Activated B cell treated with CpG ODN at 0.5 μM for 24 hours (primary cell): ENCODE measurements at regions of chr6 and their contacts with region 1.

Region 1: GRCh38 chr6:130322673-130323268 is 43.0 kb upstream of the TMEM200A start:
- DNase-seq: no peak
- ATAC-seq: peak; percentile 42
- H3K4me3 Mint-ChIP-seq: no peak overlapping the region
- H3K27ac Mint-ChIP-seq: no peak overlapping the region
- H3K4me1 Mint-ChIP-seq: peaks cover 2% of the 10 kb centered on the region
- H3K27me3 Mint-ChIP-seq: no peaks in the 10 kb centered on the region
- CTCF ChIP-seq: peak; percentile 87

Region 2: DNA sequence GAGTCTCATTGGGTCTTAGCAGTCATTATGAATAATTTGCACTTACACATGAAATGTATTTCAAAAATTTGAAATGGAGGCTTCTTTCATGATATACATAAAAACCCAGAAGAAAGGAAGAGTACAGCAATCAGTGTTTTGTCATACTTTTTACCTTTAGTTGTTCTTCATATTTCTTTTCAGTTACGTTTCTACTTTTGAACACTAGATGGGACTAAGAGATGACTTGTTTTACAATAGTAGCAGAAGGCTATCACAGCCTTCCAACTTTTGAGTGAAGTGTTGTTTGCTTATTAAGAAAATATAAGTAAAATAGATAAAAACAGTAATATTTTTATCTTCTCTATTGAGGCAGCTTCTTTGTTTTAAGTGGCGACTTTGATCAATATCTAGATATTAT is 246.3 kb before region 1 on chr6:
- CTCF ChIA-PET with region 1: interaction called, 4 read pairs
- POLR2A ChIA-PET with region 1: no interaction called
- intact Hi-C with region 1: loop called (anchors 2 kb)
- DNase-seq: no peak
- ATAC-seq: no peak
- H3K4me3 Mint-ChIP-seq: no peak overlapping the region
- H3K27ac Mint-ChIP-seq: peak overlapping the region; percentile 38
- H3K4me1 Mint-ChIP-seq: peaks cover 18% of the 10 kb centered on the region
- H3K27me3 Mint-ChIP-seq: no peaks in the 10 kb centered on the region
- CTCF ChIP-seq: no peak

Region 3: GRCh38 chr6:130426066-130426721 is 103.4 kb after region 1 on chr6:
- CTCF ChIA-PET with region 1: no interaction called
- POLR2A ChIA-PET with region 1: no interaction called
- intact Hi-C with region 1: no loop called
- DNase-seq: no peak
- ATAC-seq: no peak
- H3K4me3 Mint-ChIP-seq: no peak overlapping the region
- H3K27ac Mint-ChIP-seq: no peak overlapping the region
- H3K4me1 Mint-ChIP-seq: no peaks in the 10 kb centered on the region
- H3K27me3 Mint-ChIP-seq: peaks cover 3% of the 10 kb centered on the region
- CTCF ChIP-seq: no peak

Region 4: DNA sequence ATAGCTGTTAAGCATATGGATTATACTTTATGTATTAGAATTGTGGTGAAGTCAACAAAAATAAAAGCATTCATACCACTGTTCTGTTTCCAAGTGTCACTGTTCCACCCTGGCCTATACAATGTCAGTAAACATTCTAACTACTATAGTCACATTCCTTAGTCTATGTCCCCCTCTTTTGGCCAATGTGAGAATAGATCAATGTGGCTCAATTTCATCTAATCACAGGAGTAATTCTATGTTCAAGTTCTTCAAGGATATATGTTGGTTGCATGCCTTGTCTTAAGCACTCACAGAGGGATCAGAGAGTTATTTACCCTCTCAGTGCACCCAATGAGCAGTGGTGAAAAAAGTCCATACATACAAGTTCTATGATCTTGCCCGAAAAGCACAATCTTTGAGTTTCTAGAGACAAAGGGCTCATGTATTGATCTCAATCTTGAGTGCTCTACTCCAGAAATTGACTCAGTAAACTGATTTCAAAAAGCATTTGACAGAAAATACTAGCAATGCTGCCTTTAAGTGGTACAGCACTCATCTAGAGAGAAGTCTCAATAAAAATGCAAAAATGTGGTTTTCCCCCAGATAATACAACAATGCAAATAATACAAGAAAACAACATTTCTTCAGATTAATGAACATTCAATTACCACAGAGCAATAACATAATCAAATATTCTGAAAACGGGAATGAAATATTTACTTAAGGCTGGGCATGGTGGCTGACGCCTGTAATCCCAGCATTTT is 521.0 kb after region 1 on chr6:
- CTCF ChIA-PET with region 1: interaction called, 8 read pairs
- POLR2A ChIA-PET with region 1: no interaction called
- intact Hi-C with region 1: loop called (anchors 1 kb)
- DNase-seq: no peak
- ATAC-seq: peak; percentile 73
- H3K4me3 Mint-ChIP-seq: no peak overlapping the region
- H3K27ac Mint-ChIP-seq: no peak overlapping the region
- H3K4me1 Mint-ChIP-seq: peaks cover 19% of the 10 kb centered on the region
- H3K27me3 Mint-ChIP-seq: no peaks in the 10 kb centered on the region
- CTCF ChIP-seq: peak; percentile 31

Region 5: GRCh38 chr6:130872250-130873095 is 549.7 kb after region 1 on chr6:
- CTCF ChIA-PET with region 1: interaction called, 15 read pairs
- POLR2A ChIA-PET with region 1: no interaction called
- intact Hi-C with region 1: loop called (anchors 1 kb)
- DNase-seq: peak; percentile 37
- ATAC-seq: no peak
- H3K4me3 Mint-ChIP-seq: no peak overlapping the region
- H3K27ac Mint-ChIP-seq: no peak overlapping the region
- H3K4me1 Mint-ChIP-seq: peaks cover 4% of the 10 kb centered on the region
- H3K27me3 Mint-ChIP-seq: no peaks in the 10 kb centered on the region
- CTCF ChIP-seq: peak; percentile 82

Region 6: DNA sequence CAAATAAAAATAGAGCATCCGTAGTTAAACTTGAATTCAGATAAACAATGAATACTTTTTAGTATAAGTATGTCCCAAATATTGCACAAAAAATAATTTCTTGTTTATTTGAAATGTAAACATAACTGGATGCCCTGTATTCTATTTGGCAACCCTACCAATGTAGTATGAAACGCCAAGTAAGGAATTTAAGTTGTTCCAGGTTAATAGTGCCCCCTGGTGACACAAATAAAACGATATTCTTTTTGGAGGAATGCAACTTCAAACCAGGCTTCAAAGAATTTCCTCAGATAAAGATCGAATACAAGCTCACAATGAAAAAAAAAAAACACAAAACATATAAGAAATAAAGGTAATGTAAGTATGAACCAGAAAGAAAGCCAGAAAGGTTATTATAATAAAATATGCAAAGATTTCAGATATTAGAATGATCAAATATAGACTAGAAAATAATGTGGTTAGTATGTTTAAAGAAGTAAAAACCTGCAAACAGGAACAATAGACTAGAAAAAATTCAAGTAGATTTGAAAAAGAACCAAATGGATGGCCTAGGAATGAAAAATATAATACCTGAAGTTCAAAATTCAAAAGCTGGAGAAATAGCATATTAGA is 794.1 kb after region 1 on chr6:
- CTCF ChIA-PET with region 1: no interaction called
- POLR2A ChIA-PET with region 1: no interaction called
- intact Hi-C with region 1: loop called (anchors 5 kb)
- DNase-seq: no peak
- ATAC-seq: peak; percentile 34
- H3K4me3 Mint-ChIP-seq: no peak overlapping the region
- H3K27ac Mint-ChIP-seq: no peak overlapping the region
- H3K4me1 Mint-ChIP-seq: peaks cover 14% of the 10 kb centered on the region
- H3K27me3 Mint-ChIP-seq: no peaks in the 10 kb centered on the region
- CTCF ChIP-seq: peak; percentile 33

Region 7: DNA sequence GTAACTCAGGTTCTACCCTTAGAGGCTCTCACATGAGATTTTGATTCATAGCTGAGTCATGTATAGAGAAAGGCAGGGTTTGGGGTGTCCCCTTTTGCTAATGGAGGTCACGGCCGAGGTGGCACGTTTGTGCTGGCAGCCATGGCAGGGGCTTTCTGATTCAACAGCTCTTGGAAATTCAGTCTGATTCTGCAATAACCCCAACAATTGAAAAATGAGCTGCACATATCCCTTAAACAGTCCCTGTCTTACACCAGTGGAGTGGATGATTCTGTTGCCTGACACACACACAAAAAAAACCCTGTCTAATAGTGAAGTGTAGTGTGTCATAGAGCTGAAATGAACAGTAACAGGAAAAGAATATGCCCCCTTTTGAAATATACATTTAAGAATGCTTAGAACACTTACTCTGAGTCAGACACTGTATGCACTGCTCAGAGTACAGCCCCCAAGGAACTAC is 1209.8 kb after region 1 on chr6:
- CTCF ChIA-PET with region 1: interaction called, 5 read pairs
- POLR2A ChIA-PET with region 1: no interaction called
- intact Hi-C with region 1: loop called (anchors 2 kb)
- DNase-seq: no peak
- ATAC-seq: peak; percentile 47
- H3K4me3 Mint-ChIP-seq: no peak overlapping the region
- H3K27ac Mint-ChIP-seq: no peak overlapping the region
- H3K4me1 Mint-ChIP-seq: peaks cover 10% of the 10 kb centered on the region
- H3K27me3 Mint-ChIP-seq: no peaks in the 10 kb centered on the region
- CTCF ChIP-seq: no peak